Thyroid gland (tissue), 4 donors: ENCODE measurements at regions of chr22 and their contacts with region 1.

Region 1: GRCh38 chr22:46803031-46803880 is 40.8 kb downstream of the TBC1D22A start:
- DNase-seq: peak; percentile 56 to 61
- H3K4me3 ChIP-seq: no peak overlapping the region
- H3K27ac ChIP-seq: no peak overlapping the region
- H3K4me1 ChIP-seq: peaks cover 27 to 33% of the 10 kb centered on the region in 2 donors
- H3K27me3 ChIP-seq: no peaks in the 10 kb centered on the region
- CTCF ChIP-seq: peak; percentile 89 to 98 (median 92)
- POLR2A ChIP-seq: no peak

Region 2: DNA sequence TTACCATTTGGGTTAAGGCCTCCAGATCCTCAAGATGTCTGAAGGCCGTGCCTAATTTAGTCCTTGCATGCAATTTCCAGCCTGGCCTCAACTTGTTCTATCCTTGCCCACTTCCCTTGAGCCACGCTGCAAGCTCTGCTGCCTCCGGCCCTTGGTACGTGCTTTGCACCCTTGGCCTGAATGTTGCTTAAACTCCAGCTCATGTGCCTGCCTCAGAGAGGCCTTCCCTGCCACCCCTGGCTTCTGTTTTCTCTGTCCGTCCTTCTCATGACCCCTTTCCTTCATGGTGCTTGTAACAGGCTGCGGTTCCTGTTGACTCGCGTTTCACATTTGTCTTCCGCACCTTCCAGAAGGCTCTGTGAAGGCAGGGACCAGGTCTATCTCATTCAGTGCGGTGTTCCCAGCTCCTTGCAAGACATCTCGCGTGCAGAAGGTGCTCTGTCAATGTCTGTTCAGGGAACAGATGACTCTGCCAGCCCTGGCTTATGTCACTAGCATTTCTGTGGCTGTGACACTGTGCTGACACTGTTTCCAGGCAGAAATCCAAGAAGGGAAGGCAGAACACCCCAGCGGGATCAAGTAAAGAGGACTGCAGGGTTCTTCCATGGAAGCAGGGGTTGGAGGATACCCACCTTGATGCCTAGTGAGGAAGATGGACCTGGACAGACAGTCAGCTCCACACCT is 1238.8 kb before region 1 on chr22:
- intact Hi-C with region 1: no loop called
- DNase-seq: no peak
- H3K4me3 ChIP-seq: no peak overlapping the region
- H3K27ac ChIP-seq: no peak overlapping the region
- H3K4me1 ChIP-seq: no peaks in the 10 kb centered on the region
- H3K27me3 ChIP-seq: no peaks in the 10 kb centered on the region
- CTCF ChIP-seq: no peak
- POLR2A ChIP-seq: no peak

Region 3: DNA sequence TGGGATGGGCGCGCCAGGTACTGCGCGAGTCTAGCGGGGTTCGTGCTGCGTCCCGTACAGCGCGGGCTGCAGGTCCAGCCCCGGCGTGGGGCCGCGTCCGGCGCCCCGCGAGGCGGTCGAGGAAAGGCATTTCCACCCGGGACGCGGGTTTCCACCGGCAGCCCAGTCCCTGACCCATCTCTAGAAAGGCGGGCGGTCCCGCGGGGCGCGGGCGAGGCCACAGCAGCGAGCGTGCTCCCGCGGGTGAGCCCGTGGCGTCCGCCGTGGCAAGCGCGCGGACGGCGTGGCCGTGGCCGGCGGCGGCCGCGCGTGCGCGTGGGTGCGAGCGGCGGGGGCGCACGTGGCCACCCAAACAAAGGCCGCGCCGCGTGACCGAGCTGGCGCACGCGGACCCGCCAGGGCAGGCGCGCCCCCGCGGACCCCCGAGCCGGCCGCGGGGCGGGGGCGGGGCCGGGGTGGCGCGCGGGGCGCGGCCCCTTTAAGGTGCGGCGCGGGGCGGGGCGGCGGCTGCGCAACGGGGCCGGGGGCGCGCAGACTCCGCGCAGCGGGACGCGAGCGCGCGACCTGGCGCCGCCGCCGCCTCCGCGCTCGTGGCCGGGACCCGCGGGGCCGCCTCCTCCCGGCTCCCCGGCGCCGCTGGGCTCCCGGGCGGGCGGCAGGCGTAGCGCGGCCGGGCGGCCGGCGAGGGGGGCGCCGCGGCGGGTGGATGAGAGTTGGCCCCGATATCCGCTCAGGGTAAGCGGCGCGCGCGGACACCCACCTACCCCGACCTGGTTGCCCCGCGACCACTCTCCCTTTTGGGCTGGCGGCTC is 226.5 kb before region 1 on chr22:
- intact Hi-C with region 1: loop called (anchors 10 kb)
- DNase-seq: peak; percentile 57 to 59
- H3K4me3 ChIP-seq: peak overlapping the region in 2 of 3 donors; percentile 5 to 71
- H3K27ac ChIP-seq: peak overlapping the region in 2 of 3 donors; percentile 23 to 44
- H3K4me1 ChIP-seq: peaks cover 43 to 58% of the 10 kb centered on the region in 2 donors
- H3K27me3 ChIP-seq: no peaks in the 10 kb centered on the region
- CTCF ChIP-seq: no peak
- POLR2A ChIP-seq: peak in 1 of 2 donors; percentile 46

Region 4: GRCh38 chr22:46758867-46759290 is 44.4 kb before region 1 on chr22:
- intact Hi-C with region 1: loop called (anchors 5 kb)
- DNase-seq: peak; percentile 84 to 89
- H3K4me3 ChIP-seq: no peak overlapping the region
- H3K27ac ChIP-seq: peak overlapping the region; percentile 43 to 64 (median 45)
- H3K4me1 ChIP-seq: peaks cover 30 to 36% of the 10 kb centered on the region in 2 donors
- H3K27me3 ChIP-seq: no peaks in the 10 kb centered on the region
- CTCF ChIP-seq: peak; percentile 31 to 93 (median 83)
- POLR2A ChIP-seq: no peak